Activated CD4-positive, alpha-beta T cell treated with anti-CD3 and anti-CD28 coated beads, Interleukin-2, amount 10 ng/mL, durations not matched to agents 7 days and 5 days (primary cell): ENCODE measurements at regions of chr3 and their contacts with region 1.

Region 1: DNA sequence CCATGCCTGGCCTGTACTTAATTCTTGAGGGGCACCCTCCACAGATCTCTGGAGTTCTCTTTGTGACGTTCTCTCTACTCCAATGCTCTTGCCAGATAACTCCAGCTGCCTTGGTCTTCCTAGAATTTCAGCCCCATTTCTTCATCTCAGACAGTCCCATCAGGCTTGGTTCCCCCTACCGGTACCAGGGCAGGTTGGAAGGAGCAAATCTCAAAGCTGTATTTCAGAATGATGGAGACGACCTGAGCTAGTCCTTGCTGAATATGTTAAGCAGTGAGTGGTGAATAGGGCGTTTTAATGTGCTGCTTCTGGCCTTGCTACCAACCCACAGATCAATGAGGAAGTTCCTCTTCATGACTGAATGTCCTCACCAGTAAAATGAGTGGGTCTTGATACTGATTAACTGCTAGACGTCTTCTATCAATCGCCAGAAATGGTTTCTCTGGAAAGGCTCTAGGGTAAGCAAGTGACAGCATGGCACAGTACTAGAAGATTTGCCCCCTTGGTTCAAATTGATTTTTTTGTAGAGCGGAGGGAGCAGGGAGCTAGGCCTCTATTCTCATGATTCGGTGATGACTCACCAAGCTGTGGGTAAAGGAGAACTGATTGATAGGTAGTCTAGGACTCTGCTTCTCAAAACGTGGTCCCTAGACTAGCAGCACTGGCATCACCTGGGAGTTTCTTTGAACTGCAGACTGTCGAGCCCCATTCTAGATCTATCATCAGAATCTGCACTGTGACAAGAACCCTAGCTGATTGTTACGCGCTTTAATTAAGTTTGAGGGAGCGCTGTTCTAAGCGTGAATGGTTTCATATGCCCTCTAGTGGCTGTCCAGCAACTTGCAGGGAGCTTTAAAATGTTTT is 67.8 kb downstream of the UBP1 start:
- DNase-seq: peak; percentile 61
- H3K4me3 Mint-ChIP-seq: no peak overlapping the region
- H3K27ac Mint-ChIP-seq: no peak overlapping the region
- H3K4me1 Mint-ChIP-seq: peaks cover 5% of the 10 kb centered on the region
- H3K27me3 Mint-ChIP-seq: peaks cover 2% of the 10 kb centered on the region

Region 2: DNA sequence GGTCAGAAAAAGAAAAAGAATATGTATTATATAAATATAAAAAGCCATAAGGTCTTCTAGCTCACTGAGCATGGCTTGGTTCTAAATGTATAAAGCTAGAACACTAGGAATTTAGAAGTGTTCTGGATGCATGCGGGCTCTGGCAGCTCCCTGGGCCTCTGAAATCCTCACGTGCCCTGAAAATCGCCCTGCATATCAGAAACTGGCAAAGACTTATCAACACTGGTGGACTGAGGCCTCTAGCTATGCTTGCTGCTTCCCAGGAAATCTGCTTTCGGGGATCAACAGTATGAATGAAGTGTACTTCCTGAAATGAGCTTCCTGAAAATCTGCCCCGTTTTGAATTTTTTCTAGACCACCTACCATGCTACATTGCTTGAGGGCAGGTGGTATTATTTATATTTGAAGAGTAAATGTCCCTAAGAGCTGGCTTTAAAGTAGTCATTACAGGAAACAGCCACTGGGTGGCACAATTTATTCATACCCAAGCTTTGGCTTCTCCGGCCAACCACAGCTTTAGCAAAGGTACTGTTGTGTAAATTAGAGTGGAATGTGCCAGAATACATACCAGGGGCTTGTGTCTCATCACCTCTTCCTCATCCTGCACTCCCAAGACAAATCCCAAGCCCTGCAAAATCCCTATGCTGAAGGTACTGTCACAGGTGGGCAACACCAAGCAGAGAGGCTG is 241.0 kb before region 1 on chr3:
- CTCF ChIA-PET with region 1: interaction called, 11 read pairs
- POLR2A ChIA-PET with region 1: no interaction called
- DNase-seq: peak; percentile 58
- H3K4me3 Mint-ChIP-seq: no peak overlapping the region
- H3K27ac Mint-ChIP-seq: no peak overlapping the region
- H3K4me1 Mint-ChIP-seq: peaks cover 18% of the 10 kb centered on the region
- H3K27me3 Mint-ChIP-seq: no peaks in the 10 kb centered on the region

Region 3: GRCh38 chr3:33339758-33340157 is 32.7 kb before region 1 on chr3:
- CTCF ChIA-PET with region 1: no interaction called
- POLR2A ChIA-PET with region 1: no interaction called
- DNase-seq: no peak
- H3K4me3 Mint-ChIP-seq: no peak overlapping the region
- H3K27ac Mint-ChIP-seq: no peak overlapping the region
- H3K4me1 Mint-ChIP-seq: no peaks in the 10 kb centered on the region
- H3K27me3 Mint-ChIP-seq: peaks cover 3% of the 10 kb centered on the region

Region 4: DNA sequence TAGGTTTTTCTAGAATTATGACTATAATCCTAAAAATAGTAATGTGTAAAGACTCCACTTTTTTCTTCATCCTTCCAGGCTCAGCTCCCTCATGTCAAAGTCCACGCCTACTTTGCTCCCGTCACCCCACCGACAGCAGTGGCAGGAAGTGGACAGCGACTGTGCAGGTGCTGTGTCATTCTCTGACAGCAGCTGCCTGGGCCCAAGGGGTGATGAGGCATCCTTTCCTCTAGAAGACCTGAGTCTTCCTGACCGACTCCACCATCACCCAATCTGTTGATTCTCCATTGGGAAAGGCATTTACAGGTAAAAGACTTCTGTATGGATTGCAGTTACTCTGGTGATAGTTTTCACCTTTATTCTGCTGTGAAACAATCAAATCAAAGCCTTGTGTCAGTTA is 13.0 kb after region 1 on chr3:
- CTCF ChIA-PET with region 1: interaction called, 17 read pairs
- POLR2A ChIA-PET with region 1: no interaction called
- DNase-seq: peak; percentile 50
- H3K4me3 Mint-ChIP-seq: no peak overlapping the region
- H3K27ac Mint-ChIP-seq: peak overlapping the region; percentile 57
- H3K4me1 Mint-ChIP-seq: peaks cover 20% of the 10 kb centered on the region
- H3K27me3 Mint-ChIP-seq: no peaks in the 10 kb centered on the region

Region 5: DNA sequence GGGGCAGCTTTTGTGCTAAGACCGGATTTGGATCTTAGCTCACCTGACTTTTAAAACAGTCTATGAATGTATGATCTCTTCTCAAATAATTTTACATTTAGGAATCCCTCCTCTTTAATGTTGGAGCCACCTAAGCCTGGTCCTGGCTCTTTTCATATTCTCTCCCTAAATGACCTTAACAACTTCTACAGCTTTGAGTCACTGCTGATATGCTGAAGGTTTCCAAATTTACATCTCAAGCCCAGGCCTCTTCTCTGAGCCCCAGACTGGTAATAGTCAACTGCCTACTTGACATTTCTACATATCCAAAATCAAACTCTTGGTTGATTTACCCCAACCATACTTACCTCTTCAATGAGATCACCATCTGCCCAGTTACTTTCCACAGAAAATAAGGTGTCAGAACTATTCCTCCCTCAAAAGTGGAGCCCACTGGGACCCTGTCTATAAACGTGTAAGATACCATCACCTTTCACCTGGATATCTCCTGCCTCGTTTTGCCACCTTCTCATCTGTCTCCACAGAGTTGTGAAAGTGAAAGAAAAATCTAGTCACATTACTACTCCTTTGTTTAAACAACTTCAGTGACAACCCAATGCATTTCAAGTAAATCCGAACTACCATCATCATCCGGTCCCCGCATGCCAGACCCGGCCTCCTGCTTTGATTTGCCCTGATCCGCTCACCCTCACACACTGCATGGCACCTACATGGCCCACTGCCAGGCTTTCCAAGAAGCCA is 19.0 kb after region 1 on chr3:
- CTCF ChIA-PET with region 1: interaction called, 17 read pairs
- POLR2A ChIA-PET with region 1: no interaction called
- DNase-seq: no peak
- H3K4me3 Mint-ChIP-seq: no peak overlapping the region
- H3K27ac Mint-ChIP-seq: peak overlapping the region; percentile 38
- H3K4me1 Mint-ChIP-seq: peaks cover 19% of the 10 kb centered on the region
- H3K27me3 Mint-ChIP-seq: no peaks in the 10 kb centered on the region

Region 6: GRCh38 chr3:33417066-33417673 is 44.7 kb after region 1 on chr3:
- CTCF ChIA-PET with region 1: no interaction called
- POLR2A ChIA-PET with region 1: no interaction called
- DNase-seq: no peak
- H3K4me3 Mint-ChIP-seq: no peak overlapping the region
- H3K27ac Mint-ChIP-seq: no peak overlapping the region
- H3K4me1 Mint-ChIP-seq: peaks cover 19% of the 10 kb centered on the region
- H3K27me3 Mint-ChIP-seq: no peaks in the 10 kb centered on the region